PC-3 (cell line): ENCODE measurements at regions of chr5 and their contacts with region 1.

Region 1: GRCh38 chr5:128498844-128499455 is 39.1 kb downstream of the FBN2 start:
- DNase-seq: peak; percentile 70
- ATAC-seq: no peak
- H3K4me3 ChIP-seq: no peak overlapping the region
- H3K27ac ChIP-seq: no peak overlapping the region
- H3K4me1 ChIP-seq: peaks cover 5% of the 10 kb centered on the region; the same call in 1 of the 2 replicates
- H3K27me3 ChIP-seq: no peaks in the 10 kb centered on the region
- CTCF ChIP-seq: peak; percentile 77

Region 2: DNA sequence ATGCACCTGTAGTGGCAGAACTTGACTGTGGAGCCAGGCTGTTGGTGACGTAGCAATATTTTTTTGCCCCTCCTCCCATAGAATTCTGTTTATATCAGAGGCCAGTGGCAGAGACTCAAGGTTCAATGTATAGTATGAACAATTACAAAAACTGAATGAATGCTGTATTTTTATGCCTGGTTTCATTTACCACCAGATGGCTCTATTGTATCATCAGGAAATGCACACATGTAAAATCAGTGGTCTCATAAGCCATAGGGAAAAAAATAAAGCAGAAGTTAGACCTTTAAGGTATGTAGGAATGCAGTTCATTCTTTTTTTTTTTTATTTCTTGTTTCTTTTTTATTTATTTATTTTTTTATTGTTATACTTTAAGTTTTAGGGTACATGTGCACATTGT is 752.2 kb before region 1 on chr5:
- CTCF ChIA-PET with region 1: no interaction called
- POLR2A ChIA-PET with region 1: no interaction called
- intact Hi-C with region 1: loop called (anchors 1 kb)
- DNase-seq: peak; percentile 69
- ATAC-seq: peak; percentile 92
- H3K4me3 ChIP-seq: no peak overlapping the region
- H3K27ac ChIP-seq: no peak overlapping the region
- H3K4me1 ChIP-seq: no peaks in the 10 kb centered on the region
- H3K27me3 ChIP-seq: peaks cover 20% of the 10 kb centered on the region
- CTCF ChIP-seq: peak; percentile 81